ENCODE measurements at regions of chr19 and their contacts with region 1.

Region 1: GRCh38 chr19:4186087-4186993 is 3.9 kb downstream of the ANKRD24 start:
- DNase-seq: peak; percentile 81 to 89 (median 83)
- H3K4me3 ChIP-seq: no peak overlapping the region
- H3K27ac ChIP-seq: no peak overlapping the region
- H3K4me1 ChIP-seq: peaks cover 9 to 14% of the 10 kb centered on the region in 2 donors
- H3K27me3 ChIP-seq: no peaks in the 10 kb centered on the region
- CTCF ChIP-seq: peak; percentile 70 to 89 (median 78)
- POLR2A ChIP-seq: no peak

Region 2: GRCh38 chr19:4149518-4150288 is 36.6 kb before region 1 on chr19:
- intact Hi-C with region 1: loop called in 1 of 2 experiments (anchors 5 kb)
- DNase-seq: peak in 6 of 7 donors; percentile 48 to 85 (median 68)
- H3K4me3 ChIP-seq: no peak overlapping the region
- H3K27ac ChIP-seq: peak overlapping the region in 2 of 5 donors; percentile 52 to 74
- H3K4me1 ChIP-seq: no peaks in the 10 kb centered on the region
- H3K27me3 ChIP-seq: no peaks in the 10 kb centered on the region
- CTCF ChIP-seq: no peak
- POLR2A ChIP-seq: no peak

Measured in adrenal gland (tissue), 19 donors.